ENCODE measurements at regions of chr6 and their contacts with region 1.

Region 1: GRCh38 chr6:82144007-82144851 is 103.3 kb downstream of the IBTK start:
- DNase-seq: no peak
- H3K4me3 ChIP-seq: no peak overlapping the region
- H3K27ac ChIP-seq: peak overlapping the region; percentile 66 to 68
- H3K4me1 ChIP-seq: no peaks in the 10 kb centered on the region
- H3K27me3 ChIP-seq: no peaks in the 10 kb centered on the region
- CTCF ChIP-seq: no peak
- POLR2A ChIP-seq: no peak

Region 2: DNA sequence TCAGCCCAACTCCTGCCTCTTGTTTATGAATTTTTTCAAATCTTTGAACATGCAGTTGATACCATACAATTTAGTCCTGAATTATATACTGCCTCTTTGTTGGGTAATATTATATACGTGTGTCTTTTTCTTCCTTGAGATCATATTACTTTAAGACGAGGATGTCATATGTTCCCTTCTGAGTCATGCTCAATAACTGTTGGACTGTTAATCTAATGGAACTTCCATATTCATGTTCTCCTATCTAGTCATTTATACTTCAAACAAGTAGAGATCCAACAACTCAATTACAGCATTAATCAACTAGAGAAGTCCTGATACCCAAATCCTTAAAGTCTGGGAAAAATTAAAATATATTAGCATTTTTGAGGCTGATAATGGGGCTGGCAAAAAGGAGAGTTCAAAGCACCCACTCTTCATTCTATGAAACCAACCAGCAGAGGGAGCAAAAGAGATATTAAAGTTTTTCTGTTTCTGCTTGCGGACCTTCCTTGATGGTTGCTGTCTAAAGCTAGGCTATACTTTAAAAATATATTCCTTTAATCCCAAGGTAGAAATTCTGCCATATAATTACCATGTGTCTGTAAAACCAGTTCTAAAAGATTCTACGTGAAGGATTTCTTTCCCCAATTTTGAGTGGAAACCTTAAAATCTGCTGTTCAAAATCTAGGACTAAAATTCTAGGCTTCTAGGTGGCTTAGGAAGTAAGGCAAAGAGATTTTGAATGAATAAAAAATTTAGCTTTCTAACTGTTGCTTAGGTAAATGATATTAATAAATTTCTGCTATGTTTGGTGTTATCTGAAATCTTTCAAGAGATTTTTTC is 1538.9 kb before region 1 on chr6:
- intact Hi-C with region 1: loop called (anchors 5 kb)
- DNase-seq: no peak
- H3K4me3 ChIP-seq: no peak overlapping the region
- H3K27ac ChIP-seq: no peak overlapping the region
- H3K4me1 ChIP-seq: no peaks in the 10 kb centered on the region
- H3K27me3 ChIP-seq: no peaks in the 10 kb centered on the region
- CTCF ChIP-seq: peak in 2 of 3 donors; percentile 54 to 57
- POLR2A ChIP-seq: no peak

Measured in breast epithelium (tissue), 4 donors.